Sigmoid colon (tissue), 7 donors: ENCODE measurements at regions of chr7 and their contacts with region 1.

Region 1: GRCh38 chr7:2354186-2354938 is at the start of gene EIF3B:
- DNase-seq: peak; percentile 95
- H3K4me3 ChIP-seq: peak within 1 kb of the TSS; percentile 88 to 100 (median 98)
- H3K27ac ChIP-seq: peak within 1 kb of the TSS; percentile 92 to 99 (median 98)
- H3K4me1 ChIP-seq: peaks cover 0 to 51% (median 47%) of the 10 kb centered on the region in 4 donors
- H3K27me3 ChIP-seq: no peaks in the 10 kb centered on the region
- CTCF ChIP-seq: no peak
- EP300 ChIP-seq: no peak
- POLR2A ChIP-seq: no peak
- total RNA-seq, gene EIF3B: 89.2 to 125 (median 103) TPM

Region 2: DNA sequence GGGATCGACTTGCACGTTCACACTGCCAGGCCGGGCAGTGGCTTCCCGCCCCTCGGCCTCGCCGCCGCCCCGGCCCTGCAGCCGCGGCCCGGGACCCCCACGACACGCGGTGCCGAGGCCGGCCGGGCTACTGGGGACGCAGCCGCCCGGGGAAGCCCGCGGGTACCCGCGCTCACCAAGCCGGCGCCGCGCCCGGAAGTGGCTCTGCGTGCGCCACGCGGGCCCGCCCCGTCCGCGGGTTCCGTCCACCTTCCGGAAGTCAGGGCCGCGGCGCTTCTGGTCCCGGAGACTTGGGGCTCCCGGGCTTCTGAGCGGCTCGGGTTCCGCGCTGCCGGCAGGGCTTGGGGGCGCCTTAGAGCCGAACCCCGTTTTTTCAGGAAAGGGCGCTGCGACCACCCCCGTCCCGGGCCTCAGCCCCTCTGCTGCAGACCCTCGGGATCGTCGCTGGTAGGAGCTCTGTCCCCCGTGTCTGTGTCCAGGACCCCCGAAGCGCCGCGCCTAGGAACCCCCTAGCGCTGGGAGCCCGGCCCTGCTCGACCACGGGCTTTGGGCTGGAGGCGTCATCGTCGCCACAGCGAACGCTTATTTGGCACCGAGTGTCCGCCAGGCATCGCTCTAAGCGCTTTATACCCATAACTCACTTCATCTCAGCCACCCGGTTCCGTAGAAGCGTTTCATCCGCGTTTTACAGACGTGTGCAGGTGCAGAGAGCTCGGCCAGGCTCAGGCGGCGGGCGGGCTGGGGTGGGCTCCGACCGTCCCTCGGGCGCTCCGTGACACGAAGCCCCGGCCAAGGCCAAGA is 784.3 kb before region 1 on chr7 and contains the start of gene PSMG3:
- intact Hi-C with region 1: loop called (anchors 5 kb)
- DNase-seq: peak; percentile 96
- H3K4me3 ChIP-seq: peak within 1 kb of the TSS; percentile 65 to 91 (median 78)
- H3K27ac ChIP-seq: peak within 1 kb of the TSS; percentile 90 to 95 (median 92)
- H3K4me1 ChIP-seq: peaks cover 0 to 37% (median 29%) of the 10 kb centered on the region in 4 donors
- H3K27me3 ChIP-seq: no peaks in the 10 kb centered on the region
- CTCF ChIP-seq: peak; percentile 30 to 59 (median 35)
- EP300 ChIP-seq: no peak
- POLR2A ChIP-seq: peak; percentile 57 to 69
- total RNA-seq, gene PSMG3: 23.3 to 52.8 (median 41.6) TPM

Region 3: DNA sequence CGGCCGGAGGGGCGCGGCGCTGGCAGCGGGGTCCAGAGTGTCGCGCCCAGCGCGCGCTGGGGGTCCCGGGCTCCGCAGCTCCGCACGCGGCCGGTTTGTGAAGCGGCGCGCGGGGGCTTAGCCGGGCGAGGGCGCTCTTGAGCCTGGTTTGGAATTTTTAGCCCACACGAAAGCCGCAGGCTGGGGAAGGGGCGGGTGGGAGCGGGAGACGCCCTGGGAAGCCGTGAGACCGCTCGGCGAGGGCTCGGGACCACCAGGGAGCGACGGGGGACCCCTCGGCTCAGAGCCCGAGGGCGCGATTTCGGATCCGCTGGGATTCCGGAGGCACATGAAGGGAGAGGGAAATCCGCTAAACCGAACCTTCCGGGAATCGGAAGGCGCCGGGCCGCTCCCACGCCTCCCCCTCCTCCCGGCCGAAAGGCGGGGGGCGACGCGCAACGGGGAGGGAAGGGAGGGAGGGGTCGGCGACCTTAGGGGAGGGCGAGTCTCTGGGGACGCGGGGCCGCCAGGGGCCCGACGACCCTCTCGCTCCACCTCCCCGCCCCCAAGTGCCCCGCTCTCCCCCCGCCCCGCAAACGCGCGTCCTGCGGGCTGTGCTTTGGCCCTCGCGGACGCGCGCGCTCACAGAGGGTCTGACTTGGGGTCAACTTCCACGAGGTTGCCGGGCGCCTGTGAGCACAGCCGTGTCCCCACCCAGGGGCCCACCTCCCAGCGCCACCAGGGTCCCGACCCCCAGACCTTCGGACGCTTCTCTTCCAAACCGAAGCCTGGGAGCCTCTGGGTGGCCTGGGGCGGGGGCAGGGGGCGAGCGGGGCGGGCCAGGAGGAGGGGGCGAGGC is 689.4 kb before region 1 on chr7:
- intact Hi-C with region 1: loop called (anchors 5 kb)
- DNase-seq: peak; percentile 62
- H3K4me3 ChIP-seq: peak overlapping the region; percentile 11 to 57 (median 49)
- H3K27ac ChIP-seq: peak overlapping the region in 3 of 4 donors; percentile 12 to 34 (median 32)
- H3K4me1 ChIP-seq: peaks cover 0 to 50% (median 48%) of the 10 kb centered on the region in 4 donors
- H3K27me3 ChIP-seq: peaks cover 57 to 80% (median 78%) of the 10 kb centered on the region in 3 donors
- CTCF ChIP-seq: peak in 3 of 4 experiments; percentile 17 to 82 (median 25)
- EP300 ChIP-seq: no peak
- POLR2A ChIP-seq: no peak

Region 4: GRCh38 chr7:2104107-2104710 is 250.2 kb before region 1 on chr7:
- intact Hi-C with region 1: loop called (anchors 10 kb)
- DNase-seq: peak; percentile 97
- H3K4me3 ChIP-seq: peak overlapping the region in 3 of 4 donors; percentile 15 to 24 (median 23)
- H3K27ac ChIP-seq: peak overlapping the region; percentile 56 to 77 (median 72)
- H3K4me1 ChIP-seq: peaks cover 0 to 32% (median 27%) of the 10 kb centered on the region in 4 donors
- H3K27me3 ChIP-seq: no peaks in the 10 kb centered on the region
- CTCF ChIP-seq: peak; percentile 65 to 82 (median 76)
- EP300 ChIP-seq: peak in 2 of 4 donors; percentile 34 to 69
- POLR2A ChIP-seq: no peak

Region 5: DNA sequence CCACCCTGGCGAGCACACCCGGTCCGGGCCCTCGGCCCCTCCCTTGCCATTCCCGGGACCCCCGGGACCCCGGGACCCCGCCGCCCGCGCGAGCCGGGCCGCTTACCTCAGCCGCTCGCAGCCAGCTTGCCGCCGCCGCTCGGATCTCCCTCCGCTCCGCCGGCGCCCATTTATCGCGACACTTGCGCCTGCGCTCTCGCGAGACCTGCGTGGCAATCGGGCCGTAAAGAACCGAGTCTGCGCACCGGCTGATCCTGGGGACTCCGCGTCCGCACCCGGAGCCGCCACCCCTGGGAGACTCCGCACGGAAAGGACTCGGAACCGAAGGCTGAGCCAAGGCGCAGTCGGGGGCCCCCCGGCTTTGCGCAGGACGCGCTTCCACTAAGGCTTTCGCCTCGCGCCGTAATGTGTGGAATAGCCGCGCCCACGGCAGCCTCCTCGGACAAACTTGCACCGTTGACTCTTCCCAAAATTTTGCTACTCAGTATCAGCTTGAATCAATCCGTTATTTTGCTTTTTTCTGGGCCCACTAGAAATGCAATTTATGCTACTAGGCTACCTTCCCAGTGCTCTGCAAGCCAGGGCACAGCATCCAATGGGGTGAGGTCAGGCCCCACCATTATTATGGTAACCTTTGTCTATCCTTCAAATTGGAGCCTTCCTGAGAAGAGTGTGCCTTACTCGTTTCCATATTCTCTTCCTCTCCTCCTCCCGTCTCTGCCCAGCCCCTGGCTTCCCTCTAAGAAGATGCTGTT is 121.4 kb before region 1 on chr7 and contains the start of gene MAD1L1:
- intact Hi-C with region 1: loop called (anchors 2 kb)
- DNase-seq: peak; percentile 95
- H3K4me3 ChIP-seq: peak within 1 kb of the TSS; percentile 74 to 99 (median 86)
- H3K27ac ChIP-seq: peak within 1 kb of the TSS; percentile 78 to 81 (median 80)
- H3K4me1 ChIP-seq: peaks cover 0 to 25% (median 24%) of the 10 kb centered on the region in 4 donors
- H3K27me3 ChIP-seq: no peaks in the 10 kb centered on the region
- CTCF ChIP-seq: no peak
- EP300 ChIP-seq: no peak
- POLR2A ChIP-seq: no peak
- total RNA-seq, gene MAD1L1: 12.1 to 30.5 (median 21.4) TPM

Region 6: DNA sequence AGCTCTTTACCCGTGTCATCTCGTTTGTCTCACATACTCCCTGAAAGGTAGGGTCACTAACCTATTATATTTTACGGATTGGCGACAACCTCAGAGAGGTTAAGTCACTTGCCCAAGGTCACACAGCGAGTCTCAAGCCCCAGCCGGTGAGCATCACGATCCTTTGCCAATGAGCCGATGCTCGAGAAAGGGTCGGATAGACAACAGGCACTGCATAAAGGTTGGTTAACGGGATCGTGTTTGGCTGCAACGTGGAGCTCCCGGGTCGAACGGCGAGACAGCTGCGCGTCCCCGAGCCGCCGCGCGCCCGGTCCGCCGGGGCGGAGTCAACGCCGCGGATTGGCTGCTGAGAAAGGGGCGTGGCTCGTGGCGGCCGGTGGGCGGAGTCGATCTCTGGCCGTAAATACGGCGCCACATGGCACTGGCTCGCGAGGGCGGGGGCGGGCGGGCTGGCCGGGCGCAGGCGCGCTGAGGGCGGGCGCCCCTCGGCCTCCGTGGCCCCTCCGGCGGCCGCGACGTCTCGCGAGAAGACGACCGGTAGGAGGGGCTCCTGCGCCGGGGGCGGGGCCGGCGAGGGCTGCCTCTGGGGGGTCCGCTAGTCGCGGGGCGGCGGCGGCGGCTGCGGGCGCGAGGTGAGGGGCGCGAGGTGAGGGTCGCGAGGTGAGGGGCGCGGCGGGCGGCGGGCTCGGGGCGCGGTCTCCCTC is 48.8 kb after region 1 on chr7 and contains the start of gene CHST12:
- intact Hi-C with region 1: loop called (anchors 2 kb)
- DNase-seq: peak; percentile 97
- H3K4me3 ChIP-seq: peak within 1 kb of the TSS; percentile 85 to 97 (median 88)
- H3K27ac ChIP-seq: peak within 1 kb of the TSS; percentile 74 to 84 (median 82)
- H3K4me1 ChIP-seq: peaks cover 0 to 43% (median 33%) of the 10 kb centered on the region in 4 donors
- H3K27me3 ChIP-seq: no peaks in the 10 kb centered on the region
- CTCF ChIP-seq: no peak
- EP300 ChIP-seq: no peak
- POLR2A ChIP-seq: no peak
- total RNA-seq, gene CHST12: 7.5 to 10.9 (median 10.4) TPM

Region 7: GRCh38 chr7:2555121-2556052 is 201.0 kb after region 1 on chr7 and contains the start of gene BRAT1:
- intact Hi-C with region 1: loop called (anchors 5 kb)
- DNase-seq: peak; percentile 98
- H3K4me3 ChIP-seq: peak within 1 kb of the TSS; percentile 55 to 75 (median 72)
- H3K27ac ChIP-seq: peak within 1 kb of the TSS; percentile 85 to 98 (median 94)
- H3K4me1 ChIP-seq: peaks cover 0 to 49% (median 45%) of the 10 kb centered on the region in 4 donors
- H3K27me3 ChIP-seq: no peaks in the 10 kb centered on the region
- CTCF ChIP-seq: peak; percentile 13 to 52 (median 18)
- EP300 ChIP-seq: no peak
- POLR2A ChIP-seq: peak; percentile 41 to 59
- total RNA-seq, gene BRAT1: 17.8 to 24.6 (median 22.1) TPM

Region 8: DNA sequence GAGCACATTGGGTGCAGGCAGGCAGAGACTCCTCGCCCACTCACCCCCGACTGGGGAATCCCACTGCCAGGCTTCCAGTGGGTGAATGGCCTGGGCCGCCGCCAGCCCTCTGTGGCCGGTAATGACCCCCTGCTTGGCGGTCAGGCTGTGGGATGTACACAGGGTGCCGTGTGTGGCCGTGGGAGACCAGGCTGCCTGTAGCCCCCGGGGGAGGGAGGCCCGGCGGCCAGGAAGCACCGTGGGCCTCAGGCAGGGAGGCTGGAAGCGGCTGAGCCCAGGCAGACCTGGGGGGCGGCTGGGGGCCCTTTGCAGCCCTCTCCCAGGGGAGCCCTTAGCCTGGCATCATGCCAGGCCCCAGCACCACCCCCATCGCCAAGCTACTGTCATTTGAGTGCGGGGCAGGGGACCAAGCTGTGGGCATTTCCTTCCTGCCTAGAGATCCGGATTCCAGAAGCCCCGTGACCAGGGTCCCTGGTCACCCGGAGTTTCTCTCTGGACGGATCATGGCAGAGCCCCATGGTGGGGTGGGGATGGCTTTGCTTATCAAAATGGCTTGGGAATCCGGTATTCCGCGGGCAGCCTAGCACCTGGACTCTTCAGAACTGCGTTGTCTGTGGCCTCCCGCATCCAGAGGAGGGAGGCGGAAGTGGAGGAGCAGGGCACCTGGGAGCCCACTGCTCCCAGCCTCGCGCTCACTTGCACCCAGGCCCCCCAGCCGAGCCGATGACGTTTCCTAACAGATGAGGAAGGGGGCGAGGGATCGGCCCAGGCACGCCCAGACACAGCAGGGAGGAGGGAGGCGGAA is 278.6 kb after region 1 on chr7:
- intact Hi-C with region 1: no loop called
- DNase-seq: peak; percentile 85
- H3K4me3 ChIP-seq: peak overlapping the region; percentile 67 to 99 (median 80)
- H3K27ac ChIP-seq: peak overlapping the region; percentile 77 to 85 (median 82)
- H3K4me1 ChIP-seq: peaks cover 0 to 60% (median 46%) of the 10 kb centered on the region in 4 donors
- H3K27me3 ChIP-seq: no peaks in the 10 kb centered on the region
- CTCF ChIP-seq: no peak
- EP300 ChIP-seq: no peak
- POLR2A ChIP-seq: no peak